ENCODE measurements at regions of chr4 and their contacts with region 1.

Region 1: DNA sequence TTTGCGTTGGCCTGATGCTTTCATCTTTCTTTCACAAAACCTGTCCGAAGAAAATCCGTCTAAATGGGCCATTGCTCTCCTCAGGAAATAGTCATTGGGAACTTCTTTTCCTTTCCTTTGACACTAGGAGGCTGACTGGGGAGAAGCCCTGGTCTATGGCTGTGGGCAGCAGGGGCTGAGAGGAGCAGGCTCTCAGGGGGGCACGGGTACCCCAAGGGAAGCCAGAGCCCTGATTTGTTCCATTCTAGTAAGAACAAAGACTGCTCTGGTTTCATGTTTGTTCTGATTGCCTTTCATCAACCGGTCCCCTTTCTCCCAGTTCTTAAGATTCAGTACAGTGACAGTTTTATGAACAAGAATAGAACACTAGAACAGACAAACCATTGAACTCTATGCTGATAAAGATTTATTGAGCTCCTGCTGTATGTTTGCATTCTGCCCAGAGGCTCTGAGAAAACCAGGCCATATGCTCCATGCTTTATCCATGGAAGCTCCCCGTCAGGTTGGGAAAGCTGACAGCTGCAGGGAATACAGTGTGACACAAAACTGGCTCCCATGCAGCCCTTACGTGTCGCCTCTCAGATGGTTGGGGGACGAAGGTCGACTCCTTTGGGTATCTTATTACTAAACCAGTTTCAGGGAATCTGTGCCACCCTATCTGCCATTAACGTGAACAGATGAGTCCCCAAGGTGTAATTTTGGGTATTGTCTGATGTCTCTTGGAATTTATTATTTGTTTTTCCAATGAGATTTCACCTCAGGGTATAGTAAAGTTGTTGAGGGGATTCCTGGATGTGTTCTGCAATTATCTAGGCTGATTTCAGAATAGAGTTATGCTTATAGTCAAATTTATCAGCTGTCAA is 72.4 kb upstream of the MSANTD1 start:
- DNase-seq: no peak
- ATAC-seq: no peak
- H3K4me3 ChIP-seq: no peak overlapping the region
- H3K4me3 Mint-ChIP-seq: no peak overlapping the region
- H3K27ac ChIP-seq: no peak overlapping the region
- H3K27ac Mint-ChIP-seq: no peak overlapping the region
- H3K4me1 ChIP-seq: no peaks in the 10 kb centered on the region
- H3K4me1 Mint-ChIP-seq: no peaks in the 10 kb centered on the region
- H3K27me3 ChIP-seq: no peaks in the 10 kb centered on the region
- H3K27me3 Mint-ChIP-seq: no peaks in the 10 kb centered on the region
- CTCF ChIP-seq: no peak

Region 2: GRCh38 chr4:3128976-3129375 is 47.6 kb before region 1 on chr4:
- CTCF ChIA-PET with region 1: no interaction called
- POLR2A ChIA-PET with region 1: no interaction called
- intact Hi-C with region 1: loop called in 1 of 2 experiments (anchors 5 kb)
- DNase-seq: no peak
- ATAC-seq: no peak
- H3K4me3 ChIP-seq: no peak overlapping the region
- H3K4me3 Mint-ChIP-seq: no peak overlapping the region
- H3K27ac ChIP-seq: no peak overlapping the region
- H3K27ac Mint-ChIP-seq: peak overlapping the region; percentile 4
- H3K4me1 ChIP-seq: no peaks in the 10 kb centered on the region
- H3K4me1 Mint-ChIP-seq: no peaks in the 10 kb centered on the region
- H3K27me3 ChIP-seq: no peaks in the 10 kb centered on the region
- H3K27me3 Mint-ChIP-seq: no peaks in the 10 kb centered on the region
- CTCF ChIP-seq: no peak